Activated CD4-positive, alpha-beta memory T cell treated with anti-CD3 and anti-CD28 coated beads for 36 hours (primary cell): ENCODE measurements at regions of chr7 and their contacts with region 1.

Region 1: DNA sequence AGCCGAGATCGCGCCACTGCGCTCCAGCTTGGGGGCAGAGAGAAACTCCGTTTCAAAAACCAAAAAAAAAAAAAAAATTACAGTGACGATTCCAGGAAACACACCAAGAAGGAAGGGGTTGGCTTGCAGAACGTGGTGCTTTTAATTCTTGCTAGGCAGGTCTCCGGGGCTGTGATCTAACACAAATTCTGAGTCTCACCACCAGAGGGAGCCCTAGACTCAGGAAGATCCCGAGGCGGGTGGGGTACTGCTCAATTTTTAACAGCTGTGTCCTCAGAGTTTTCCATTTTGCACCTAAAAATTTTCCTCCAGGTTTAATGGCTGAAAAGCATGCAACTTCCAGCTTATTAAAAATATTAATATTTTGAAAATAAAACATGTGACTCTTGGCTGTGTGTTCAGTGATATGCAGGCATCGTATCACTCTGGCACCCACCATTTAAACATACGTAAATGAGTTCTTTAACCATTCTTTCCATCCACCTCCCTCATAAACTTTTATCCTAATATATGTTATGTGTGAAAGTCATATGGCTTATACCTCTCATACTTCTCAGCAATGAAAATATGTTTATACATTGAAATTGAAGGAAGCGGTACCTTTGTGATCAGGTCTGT is 26.5 kb upstream of the NUB1 start:
- DNase-seq: peak; percentile 82
- H3K4me3 Mint-ChIP-seq: no peak overlapping the region
- H3K27ac Mint-ChIP-seq: peak overlapping the region; percentile 53
- H3K4me1 Mint-ChIP-seq: peaks cover 10% of the 10 kb centered on the region
- H3K27me3 Mint-ChIP-seq: no peaks in the 10 kb centered on the region

Region 2: GRCh38 chr7:151327659-151328058 is 12.5 kb after region 1 on chr7:
- CTCF ChIA-PET with region 1: interaction called, 35 read pairs
- POLR2A ChIA-PET with region 1: no interaction called
- intact Hi-C with region 1: no loop called
- DNase-seq: no peak
- H3K4me3 Mint-ChIP-seq: no peak overlapping the region
- H3K27ac Mint-ChIP-seq: no peak overlapping the region
- H3K4me1 Mint-ChIP-seq: no peaks in the 10 kb centered on the region
- H3K27me3 Mint-ChIP-seq: no peaks in the 10 kb centered on the region

Region 3: DNA sequence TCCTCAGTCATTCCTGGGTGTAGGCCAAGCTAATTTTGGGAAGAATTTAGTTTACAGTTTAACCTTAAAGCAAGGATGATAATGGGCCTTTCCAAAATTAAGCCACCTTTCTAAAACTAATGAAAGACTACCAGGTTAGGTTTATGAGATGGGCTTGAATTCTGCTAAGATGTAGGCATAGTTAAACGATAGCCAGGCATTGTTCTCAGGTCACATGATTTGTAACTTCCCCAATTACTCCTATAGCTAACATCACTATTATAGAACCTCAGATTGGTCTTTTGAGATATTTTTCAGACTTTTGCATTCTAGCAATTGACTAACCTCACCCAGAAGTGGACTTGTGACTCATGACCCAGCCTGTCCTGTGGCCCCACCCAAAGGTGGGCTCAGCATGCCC is 19.5 kb after region 1 on chr7:
- CTCF ChIA-PET with region 1: interaction called, 27 read pairs
- POLR2A ChIA-PET with region 1: no interaction called
- intact Hi-C with region 1: no loop called
- DNase-seq: no peak
- H3K4me3 Mint-ChIP-seq: no peak overlapping the region
- H3K27ac Mint-ChIP-seq: no peak overlapping the region
- H3K4me1 Mint-ChIP-seq: peaks cover 15% of the 10 kb centered on the region
- H3K27me3 Mint-ChIP-seq: no peaks in the 10 kb centered on the region

Region 4: GRCh38 chr7:151341357-151342101 is 26.4 kb after region 1 on chr7 and contains the start of gene NUB1:
- CTCF ChIA-PET with region 1: interaction called, 27 read pairs
- POLR2A ChIA-PET with region 1: no interaction called
- intact Hi-C with region 1: no loop called
- DNase-seq: peak; percentile 95
- H3K4me3 Mint-ChIP-seq: peak within 1 kb of the TSS; percentile 76
- H3K27ac Mint-ChIP-seq: peak within 1 kb of the TSS; percentile 81
- H3K4me1 Mint-ChIP-seq: peaks cover 39% of the 10 kb centered on the region
- H3K27me3 Mint-ChIP-seq: no peaks in the 10 kb centered on the region
- total RNA-seq, gene NUB1: 48.0 to 48.6 TPM

Region 5: GRCh38 chr7:151368136-151368571 is 53.0 kb after region 1 on chr7:
- CTCF ChIA-PET with region 1: interaction called, 28 read pairs
- POLR2A ChIA-PET with region 1: no interaction called
- intact Hi-C with region 1: loop called (anchors 5 kb)
- DNase-seq: peak; percentile 87
- H3K4me3 Mint-ChIP-seq: no peak overlapping the region
- H3K27ac Mint-ChIP-seq: no peak overlapping the region
- H3K4me1 Mint-ChIP-seq: peaks cover 5% of the 10 kb centered on the region
- H3K27me3 Mint-ChIP-seq: no peaks in the 10 kb centered on the region

Region 6: DNA sequence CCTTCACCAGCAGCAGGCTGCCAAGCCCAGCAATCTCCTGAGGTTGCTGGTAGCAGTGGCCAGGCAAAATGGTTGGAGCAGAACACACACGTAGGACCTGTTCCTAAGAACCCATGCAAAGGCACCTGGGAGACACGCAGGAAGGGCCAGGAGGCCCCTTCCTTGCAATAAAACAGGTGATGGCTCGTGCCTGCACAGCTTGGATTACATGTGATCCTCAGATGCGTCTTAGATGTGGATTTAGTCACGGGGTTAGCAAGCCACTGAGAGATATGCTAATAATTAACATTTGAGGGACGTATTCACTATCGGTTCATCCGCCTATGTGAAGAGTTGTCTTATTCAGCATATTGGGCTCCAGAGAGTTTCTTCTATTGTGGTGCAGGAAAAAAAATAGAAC is 209.2 kb after region 1 on chr7:
- CTCF ChIA-PET with region 1: no interaction called
- POLR2A ChIA-PET with region 1: no interaction called
- intact Hi-C with region 1: no loop called
- DNase-seq: no peak
- H3K4me3 Mint-ChIP-seq: no peak overlapping the region
- H3K27ac Mint-ChIP-seq: no peak overlapping the region
- H3K4me1 Mint-ChIP-seq: peaks cover 5% of the 10 kb centered on the region
- H3K27me3 Mint-ChIP-seq: peaks cover 3% of the 10 kb centered on the region